ENCODE measurements at regions of chr12 and their contacts with region 1.

Region 1: GRCh38 chr12:52327052-52327829 is 6.0 kb upstream of the KRT83 start:
- DNase-seq: peak; percentile 34
- ATAC-seq: peak; percentile 97
- H3K4me3 Mint-ChIP-seq: no peak overlapping the region
- H3K27ac Mint-ChIP-seq: no peak overlapping the region
- H3K4me1 Mint-ChIP-seq: peaks cover 1% of the 10 kb centered on the region
- H3K27me3 Mint-ChIP-seq: peaks cover 16% of the 10 kb centered on the region
- CTCF ChIP-seq: no peak

Region 2: DNA sequence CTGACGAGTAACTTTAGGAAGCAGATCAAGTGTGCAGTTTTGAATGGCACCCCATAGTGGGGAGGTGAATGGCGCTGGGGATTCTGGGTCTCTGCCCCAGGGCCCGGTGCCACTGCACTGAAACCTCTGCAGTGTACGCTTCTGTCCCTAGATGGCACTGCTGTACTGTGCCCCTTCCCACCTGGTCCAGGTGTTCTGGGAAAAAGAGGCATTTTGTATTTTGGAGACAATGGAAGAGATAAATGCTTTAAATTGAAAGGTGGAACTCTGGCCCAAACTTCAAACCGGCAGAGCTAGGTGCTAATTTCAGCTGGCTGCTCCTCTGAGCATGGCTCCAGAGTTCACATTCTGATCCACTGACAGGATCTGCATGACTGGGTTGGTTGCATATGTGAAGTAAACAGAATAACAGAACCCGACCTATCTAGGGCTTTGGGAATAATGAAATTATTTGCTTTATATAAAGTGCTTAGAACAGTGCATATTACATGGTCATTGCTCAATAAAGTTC is 187.6 kb before region 1 on chr12:
- CTCF ChIA-PET with region 1: no interaction called
- POLR2A ChIA-PET with region 1: no interaction called
- intact Hi-C with region 1: loop called (anchors 5 kb)
- DNase-seq: no peak
- ATAC-seq: peak; percentile 73
- H3K4me3 Mint-ChIP-seq: no peak overlapping the region
- H3K27ac Mint-ChIP-seq: no peak overlapping the region
- H3K4me1 Mint-ChIP-seq: peaks cover 7% of the 10 kb centered on the region
- H3K27me3 Mint-ChIP-seq: peaks cover 1% of the 10 kb centered on the region
- CTCF ChIP-seq: no peak

Region 3: DNA sequence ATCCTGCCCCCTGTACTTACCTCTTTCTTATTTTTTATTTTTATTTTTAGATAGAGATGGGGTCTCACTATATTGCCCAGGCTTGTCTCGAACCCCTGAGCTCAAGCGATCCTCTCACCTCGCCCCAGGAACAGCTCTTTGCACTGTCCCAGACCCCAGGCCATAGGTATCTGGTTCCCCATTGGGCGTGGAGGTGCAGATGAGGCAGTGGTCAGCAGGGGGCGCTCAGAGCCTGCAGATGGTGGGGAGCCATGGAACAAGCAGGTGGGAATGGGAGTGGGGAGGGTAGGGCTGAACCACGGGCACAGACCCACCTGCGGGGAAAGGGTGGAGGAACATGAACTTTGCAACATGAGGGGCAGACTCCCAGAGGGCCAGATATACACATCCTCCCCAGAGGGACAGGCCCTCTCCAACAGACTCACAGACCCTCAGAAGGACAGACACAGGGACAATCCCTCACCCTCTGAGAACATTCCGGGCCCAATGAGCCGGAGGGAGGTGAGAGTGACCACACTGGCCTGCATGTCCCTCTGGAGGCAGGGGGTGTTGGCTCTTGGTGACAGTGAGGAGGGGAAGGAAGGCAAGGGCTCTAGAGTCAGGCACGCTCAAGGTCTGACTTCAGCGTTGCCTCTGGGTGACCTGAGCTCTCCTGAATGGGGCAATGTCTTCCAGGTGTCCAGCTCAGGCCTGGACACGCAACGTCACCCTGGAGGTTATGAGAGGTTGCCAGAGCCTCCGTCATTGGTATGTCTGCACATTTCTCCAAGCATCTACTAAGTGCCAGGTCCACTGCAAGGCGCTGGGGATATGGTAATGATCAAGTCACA is 170.3 kb before region 1 on chr12:
- CTCF ChIA-PET with region 1: interaction called, 14 read pairs
- POLR2A ChIA-PET with region 1: no interaction called
- intact Hi-C with region 1: loop called (anchors 1 kb)
- DNase-seq: peak; percentile 56
- ATAC-seq: peak; percentile 69
- H3K4me3 Mint-ChIP-seq: no peak overlapping the region
- H3K27ac Mint-ChIP-seq: no peak overlapping the region
- H3K4me1 Mint-ChIP-seq: no peaks in the 10 kb centered on the region
- H3K27me3 Mint-ChIP-seq: peaks cover 14% of the 10 kb centered on the region
- CTCF ChIP-seq: no peak

Region 4: GRCh38 chr12:52278541-52279421 is 48.5 kb before region 1 on chr12:
- CTCF ChIA-PET with region 1: interaction called, 3 read pairs
- POLR2A ChIA-PET with region 1: no interaction called
- intact Hi-C with region 1: loop called (anchors 1 kb)
- DNase-seq: peak; percentile 65
- ATAC-seq: peak; percentile 85
- H3K4me3 Mint-ChIP-seq: no peak overlapping the region
- H3K27ac Mint-ChIP-seq: no peak overlapping the region
- H3K4me1 Mint-ChIP-seq: peaks cover 4% of the 10 kb centered on the region
- H3K27me3 Mint-ChIP-seq: peaks cover 55% of the 10 kb centered on the region
- CTCF ChIP-seq: no peak

Measured in activated B cell treated with CpG ODN at 0.5 μM for 24 hours (primary cell).